Aorta (tissue), 5 donors: ENCODE measurements at regions of chr19 and their contacts with region 1.

Region 1: DNA sequence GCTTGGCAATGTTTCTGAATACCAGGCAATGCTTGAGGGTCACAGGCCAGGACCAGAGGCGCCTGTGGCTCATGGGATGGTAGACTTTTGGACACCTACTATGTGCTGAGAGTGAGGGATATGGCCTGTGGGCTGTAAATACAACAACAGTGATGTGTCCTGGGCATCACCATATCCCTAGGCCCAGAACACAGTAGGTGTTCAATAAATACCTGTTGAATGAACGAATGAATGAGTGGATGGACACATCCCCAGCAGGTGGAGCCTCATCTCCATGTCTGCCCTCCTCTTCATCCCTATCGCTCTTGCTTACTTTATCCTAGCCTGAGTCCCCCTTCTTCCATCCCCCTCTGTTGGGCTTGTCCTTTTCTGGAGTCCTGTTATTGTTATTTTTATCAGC is 16.5 kb upstream of the NANOS2 start:
- DNase-seq: no peak
- ATAC-seq: no peak
- H3K4me3 ChIP-seq: no peak overlapping the region
- H3K27ac ChIP-seq: no peak overlapping the region
- H3K4me1 ChIP-seq: no peaks in the 10 kb centered on the region
- H3K27me3 ChIP-seq: no peaks in the 10 kb centered on the region

Region 2: GRCh38 chr19:45739498-45740439 is 191.3 kb before region 1 on chr19:
- intact Hi-C with region 1: no loop called
- DNase-seq: no peak
- ATAC-seq: no peak
- H3K4me3 ChIP-seq: no peak overlapping the region
- H3K27ac ChIP-seq: no peak overlapping the region
- H3K4me1 ChIP-seq: no peaks in the 10 kb centered on the region
- H3K27me3 ChIP-seq: no peaks in the 10 kb centered on the region

Region 3: DNA sequence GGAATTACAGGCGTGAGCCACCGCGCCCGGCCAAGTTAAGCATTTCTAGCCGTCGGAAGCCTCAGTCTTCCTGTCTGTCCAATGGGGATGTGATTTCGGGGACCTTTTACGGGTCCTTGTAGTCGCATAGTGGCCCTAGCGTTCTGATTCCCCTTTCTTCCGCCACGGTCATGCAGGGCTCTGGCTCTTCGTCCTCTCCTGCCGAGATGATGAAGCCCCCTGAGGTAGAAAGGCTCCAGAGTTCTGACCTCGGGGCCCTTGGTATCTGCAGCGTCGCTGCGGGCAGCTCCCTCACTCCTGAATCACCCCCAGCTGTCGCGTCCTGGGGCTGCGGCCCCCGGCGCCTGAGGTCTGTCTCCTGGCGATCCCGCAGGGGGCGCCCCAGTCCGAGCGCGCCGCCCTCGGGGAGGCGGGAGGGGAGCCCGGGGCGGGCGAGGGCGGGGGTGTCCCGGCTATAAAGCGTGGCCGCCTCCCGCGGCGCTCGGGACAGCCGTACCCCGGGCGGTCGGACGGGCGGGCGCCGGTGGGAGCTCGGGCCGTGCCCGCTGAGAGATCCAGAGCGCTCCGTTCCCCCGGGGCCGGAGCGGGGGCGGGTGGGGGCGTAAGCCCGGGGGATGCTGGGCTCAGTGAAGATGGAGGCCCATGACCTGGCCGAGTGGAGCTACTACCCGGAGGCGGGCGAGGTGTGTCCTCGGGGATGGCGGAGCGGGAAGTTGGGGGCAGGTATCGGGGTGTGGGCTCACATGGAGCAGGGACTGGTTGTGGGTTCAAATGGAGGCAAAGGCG is 67.0 kb before region 1 on chr19 and contains the start of gene FOXA3:
- intact Hi-C with region 1: loop called in 1 of 2 experiments (anchors 2 kb)
- DNase-seq: peak in 1 of 2 donors; percentile 84
- ATAC-seq: peak; percentile 55
- H3K4me3 ChIP-seq: no peak within 1 kb of the TSS
- H3K27ac ChIP-seq: no peak within 1 kb of the TSS
- H3K4me1 ChIP-seq: no peaks in the 10 kb centered on the region
- H3K27me3 ChIP-seq: no peaks in the 10 kb centered on the region
- total RNA-seq, gene FOXA3: 0.23 TPM in 1 of 2 donors, not detected in the other